Mammary epithelial cell (primary cell): ENCODE measurements at regions of chr15 and their contacts with region 1.

Region 1: DNA sequence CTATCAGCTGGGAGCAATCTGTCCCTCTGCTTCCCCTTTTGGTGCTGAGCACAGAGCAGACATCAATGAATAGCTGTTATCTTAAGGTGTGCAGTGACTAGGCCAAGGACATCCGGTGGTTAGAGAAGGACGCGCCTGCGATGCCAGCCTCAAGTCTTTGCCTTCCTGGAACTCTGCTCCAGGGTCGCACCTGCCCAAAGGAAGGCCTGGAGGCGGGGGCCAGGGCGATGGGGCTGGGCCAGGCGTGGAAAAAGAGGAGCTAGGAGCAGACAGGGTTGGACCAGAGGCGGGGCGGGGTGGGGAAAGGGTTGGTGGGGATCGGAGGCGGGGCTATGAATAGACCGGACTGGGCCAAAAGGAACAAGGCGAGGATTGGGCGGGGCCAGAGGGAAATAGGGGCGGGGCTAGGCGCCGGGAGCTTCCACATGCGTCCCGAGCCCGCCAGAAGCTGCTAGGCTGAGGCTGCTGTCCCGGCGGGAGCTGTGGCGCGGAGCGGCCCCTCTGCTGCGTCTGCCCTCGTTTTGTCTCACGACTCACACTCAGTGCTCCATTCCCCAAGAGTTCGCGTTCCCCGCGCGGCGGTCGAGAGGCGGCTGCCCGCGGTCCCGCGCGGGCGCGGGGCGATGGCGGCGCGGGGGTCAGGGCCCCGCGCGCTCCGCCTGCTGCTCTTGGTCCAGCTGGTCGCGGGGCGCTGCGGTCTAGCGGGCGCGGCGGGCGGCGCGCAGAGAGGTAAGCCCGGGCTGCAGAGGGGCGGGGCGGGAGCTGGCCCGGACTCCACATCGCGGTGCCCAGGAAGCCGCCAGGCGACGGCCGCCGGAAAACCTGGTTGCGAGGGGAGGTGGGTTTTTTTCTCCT is at the start of gene CHRNA5:
- DNase-seq: peak; percentile 83
- H3K4me3 ChIP-seq: peak within 1 kb of the TSS; percentile 54 to 73 (median 70)
- H3K27ac ChIP-seq: peak within 1 kb of the TSS; percentile 9
- H3K4me1 ChIP-seq: peaks cover 5% of the 10 kb centered on the region
- H3K27me3 ChIP-seq: no peaks in the 10 kb centered on the region
- CTCF ChIP-seq: no peak
- total RNA-seq, gene CHRNA5: 2.2 to 13.9 TPM

Region 2: DNA sequence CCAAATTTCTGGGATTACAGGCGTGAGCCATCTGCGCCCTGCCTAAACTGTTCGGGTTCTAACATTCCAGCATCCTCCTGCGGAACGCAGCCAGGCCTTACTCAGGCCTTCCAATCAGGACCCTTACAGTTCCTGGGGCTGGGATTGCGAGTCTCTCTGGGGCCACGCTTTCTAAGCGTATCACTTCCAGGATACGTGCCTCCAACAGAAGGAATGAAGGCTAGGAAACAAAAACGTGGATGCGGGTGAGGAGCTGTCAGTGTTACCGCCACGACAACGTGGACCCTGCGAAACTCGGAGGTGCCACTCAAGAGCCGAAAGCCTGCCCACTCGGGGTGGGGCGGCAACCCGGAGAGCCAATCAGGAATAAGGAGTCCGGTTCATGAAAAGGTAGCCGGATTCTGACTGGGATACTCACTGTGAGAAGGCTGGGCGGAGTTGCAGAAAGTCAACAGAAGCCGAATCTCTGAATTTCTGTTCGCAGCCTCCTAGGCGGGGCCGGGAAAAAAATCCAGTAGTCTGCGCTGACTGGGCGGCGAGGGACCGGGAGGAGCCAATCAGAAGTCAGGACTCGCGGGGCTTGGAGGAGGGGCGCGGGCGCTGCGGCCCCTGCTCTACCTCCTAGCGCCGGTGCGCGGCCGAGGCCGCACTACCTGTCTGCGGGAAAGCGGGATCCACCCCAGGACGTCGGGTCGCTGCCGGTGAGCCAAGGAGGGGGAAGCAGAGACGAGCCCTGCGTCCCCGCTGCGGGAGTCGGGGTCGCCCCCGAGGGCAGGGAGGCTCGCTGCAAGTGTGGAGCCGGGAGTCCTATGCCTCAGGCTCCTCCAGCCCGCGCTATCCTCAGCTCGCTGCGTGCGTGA is 58.1 kb before region 1 on chr15 and contains the start of gene HYKK:
- CTCF ChIA-PET with region 1: no interaction called
- dilution Hi-C with region 1: no loop called
- in situ Hi-C with region 1: no loop called
- intact Hi-C with region 1: loop called (anchors 1 kb)
- DNase-seq: peak; percentile 98
- H3K4me3 ChIP-seq: peak within 1 kb of the TSS; percentile 81 to 95 (median 91)
- H3K27ac ChIP-seq: peak within 1 kb of the TSS; percentile 15
- H3K4me1 ChIP-seq: peaks cover 5% of the 10 kb centered on the region
- H3K27me3 ChIP-seq: peaks cover 2% of the 10 kb centered on the region
- CTCF ChIP-seq: peak in 1 of 2 donors; percentile 33
- total RNA-seq, gene HYKK: 2.9 to 4.3 TPM

Region 3: DNA sequence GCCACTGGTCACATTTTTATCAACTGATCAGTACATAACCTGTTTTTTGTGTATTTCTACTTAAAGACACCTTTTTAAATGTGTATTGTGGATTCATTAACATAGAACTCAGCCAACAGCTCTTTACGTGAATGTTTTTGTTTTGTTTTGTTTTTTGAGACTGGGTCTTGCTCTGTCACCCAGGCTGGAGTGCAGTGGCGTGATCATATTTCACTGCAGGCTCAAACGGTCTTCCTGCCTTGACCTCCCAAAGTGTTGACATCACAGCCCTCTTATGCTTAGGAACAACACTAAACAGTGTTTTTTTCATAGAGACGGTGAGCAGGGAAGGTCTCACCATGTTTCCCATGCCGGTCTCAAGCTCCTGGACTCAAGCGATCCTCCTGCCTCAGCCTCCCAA is 15.1 kb before region 1 on chr15:
- CTCF ChIA-PET with region 1: no interaction called
- dilution Hi-C with region 1: no loop called
- in situ Hi-C with region 1: no loop called
- intact Hi-C with region 1: no loop called
- DNase-seq: no peak
- H3K4me3 ChIP-seq: no peak overlapping the region
- H3K27ac ChIP-seq: no peak overlapping the region
- H3K4me1 ChIP-seq: no peaks in the 10 kb centered on the region
- H3K27me3 ChIP-seq: no peaks in the 10 kb centered on the region
- CTCF ChIP-seq: no peak

Region 4: GRCh38 chr15:78638658-78639314 is 73.5 kb after region 1 on chr15:
- CTCF ChIA-PET with region 1: no interaction called
- dilution Hi-C with region 1: no loop called
- in situ Hi-C with region 1: no loop called
- intact Hi-C with region 1: no loop called
- DNase-seq: no peak
- H3K4me3 ChIP-seq: no peak overlapping the region
- H3K27ac ChIP-seq: no peak overlapping the region
- H3K4me1 ChIP-seq: peaks cover 10% of the 10 kb centered on the region
- H3K27me3 ChIP-seq: no peaks in the 10 kb centered on the region
- CTCF ChIP-seq: peak; percentile 45 to 73

Region 5: GRCh38 chr15:78663703-78664102 is 98.4 kb after region 1 on chr15:
- CTCF ChIA-PET with region 1: no interaction called
- dilution Hi-C with region 1: loop called (anchors 5 kb)
- in situ Hi-C with region 1: no loop called
- intact Hi-C with region 1: no loop called
- DNase-seq: no peak
- H3K4me3 ChIP-seq: no peak overlapping the region
- H3K27ac ChIP-seq: no peak overlapping the region
- H3K4me1 ChIP-seq: no peaks in the 10 kb centered on the region
- H3K27me3 ChIP-seq: no peaks in the 10 kb centered on the region
- CTCF ChIP-seq: no peak